ENCODE measurements at regions of chr17 and their contacts with region 1.

Region 1: GRCh38 chr17:32755045-32755805 is 121.7 kb downstream of the MYO1D start:
- DNase-seq: no peak
- ATAC-seq: peak; percentile 59

Region 2: GRCh38 chr17:32319548-32319905 is 435.7 kb before region 1 on chr17:
- intact Hi-C with region 1: no loop called
- DNase-seq: peak; percentile 86
- ATAC-seq: peak; percentile 93

Region 3: GRCh38 chr17:32461853-32462617 is 293.2 kb before region 1 on chr17:
- intact Hi-C with region 1: loop called (anchors 5 kb)
- DNase-seq: no peak
- ATAC-seq: peak; percentile 72

Region 4: GRCh38 chr17:32486111-32486700 is 269.0 kb before region 1 on chr17:
- intact Hi-C with region 1: loop called (anchors 5 kb)
- DNase-seq: peak; percentile 91
- ATAC-seq: peak; percentile 84

Region 5: DNA sequence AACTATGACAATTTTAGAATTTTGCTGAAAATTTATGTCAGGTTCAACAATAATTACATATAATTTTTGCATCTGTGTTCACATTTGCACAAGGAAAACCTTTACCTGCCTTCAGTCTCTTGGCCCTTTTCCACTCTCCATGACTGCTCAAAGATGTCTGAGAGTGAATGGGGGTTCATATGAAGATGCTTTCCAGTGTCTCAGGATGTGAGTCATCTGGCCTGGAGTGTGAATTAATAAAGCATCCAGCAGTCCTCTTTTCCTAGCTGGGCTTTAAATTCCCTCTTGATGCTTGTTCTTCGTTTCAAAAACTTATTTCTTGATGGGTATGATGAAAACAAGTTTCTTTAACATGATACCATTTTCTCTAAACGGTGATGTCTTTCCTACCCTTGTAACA is 168.6 kb before region 1 on chr17:
- intact Hi-C with region 1: no loop called
- DNase-seq: no peak
- ATAC-seq: no peak

Region 6: GRCh38 chr17:32659419-32659842 is 95.8 kb before region 1 on chr17:
- intact Hi-C with region 1: loop called (anchors 1 kb)
- DNase-seq: peak; percentile 67
- ATAC-seq: peak; percentile 74

Region 7: GRCh38 chr17:32870027-32870670 is 114.9 kb after region 1 on chr17:
- intact Hi-C with region 1: no loop called
- DNase-seq: no peak
- ATAC-seq: peak; percentile 74